Mammary epithelial cell (primary cell): ENCODE measurements at regions of chr12 and their contacts with region 1.

Region 1: GRCh38 chr12:96061864-96062453 is 26.6 kb upstream of the LTA4H start:
- DNase-seq: peak; percentile 72
- H3K4me3 ChIP-seq: no peak overlapping the region
- H3K27ac ChIP-seq: no peak overlapping the region
- H3K4me1 ChIP-seq: no peaks in the 10 kb centered on the region
- H3K27me3 ChIP-seq: no peaks in the 10 kb centered on the region
- CTCF ChIP-seq: peak; percentile 73 to 84

Region 2: DNA sequence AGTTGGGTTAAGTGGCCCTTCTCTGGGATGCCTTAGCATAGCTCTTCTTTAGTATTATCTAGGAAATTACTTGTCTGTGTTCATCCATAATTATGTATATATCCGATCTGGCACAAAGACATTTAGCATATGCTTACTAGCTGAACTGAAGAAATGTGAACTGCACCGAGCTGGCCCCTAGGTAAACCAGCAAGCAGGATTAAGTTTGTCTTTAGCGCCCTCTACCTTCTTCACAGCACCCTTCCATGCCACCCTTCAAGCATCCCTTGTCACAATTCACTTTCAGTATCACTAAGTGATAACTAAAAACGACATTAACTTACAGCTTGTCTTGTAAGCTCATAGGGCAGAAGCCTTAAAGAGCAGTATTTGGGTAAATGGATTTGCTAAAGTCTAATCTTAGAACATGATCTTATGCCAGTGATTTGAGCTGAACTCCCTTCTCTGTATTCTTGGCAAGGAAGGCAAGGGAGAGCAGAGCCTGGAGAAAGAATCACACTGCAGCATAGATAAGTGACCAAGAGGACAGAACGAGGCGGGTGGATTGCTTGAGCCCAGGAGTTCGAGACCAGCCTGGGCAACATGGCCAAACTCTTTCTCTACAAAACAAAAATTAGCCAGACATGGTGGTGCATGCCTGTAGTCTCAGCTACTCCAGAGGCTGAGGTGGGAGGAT is 63.2 kb before region 1 on chr12:
- CTCF ChIA-PET with region 1: no interaction called
- dilution Hi-C with region 1: no loop called
- in situ Hi-C with region 1: no loop called
- intact Hi-C with region 1: no loop called
- DNase-seq: peak; percentile 40
- H3K4me3 ChIP-seq: no peak overlapping the region
- H3K27ac ChIP-seq: no peak overlapping the region
- H3K4me1 ChIP-seq: peaks cover 16% of the 10 kb centered on the region
- H3K27me3 ChIP-seq: no peaks in the 10 kb centered on the region
- CTCF ChIP-seq: peak; percentile 73 to 74

Region 3: GRCh38 chr12:96132819-96133218 is 70.9 kb after region 1 on chr12:
- CTCF ChIA-PET with region 1: no interaction called
- dilution Hi-C with region 1: no loop called
- in situ Hi-C with region 1: no loop called
- intact Hi-C with region 1: loop called (anchors 1 kb)
- DNase-seq: no peak
- H3K4me3 ChIP-seq: no peak overlapping the region
- H3K27ac ChIP-seq: no peak overlapping the region
- H3K4me1 ChIP-seq: peaks cover 6% of the 10 kb centered on the region
- H3K27me3 ChIP-seq: no peaks in the 10 kb centered on the region
- CTCF ChIP-seq: peak; percentile 11 to 31

Region 4: DNA sequence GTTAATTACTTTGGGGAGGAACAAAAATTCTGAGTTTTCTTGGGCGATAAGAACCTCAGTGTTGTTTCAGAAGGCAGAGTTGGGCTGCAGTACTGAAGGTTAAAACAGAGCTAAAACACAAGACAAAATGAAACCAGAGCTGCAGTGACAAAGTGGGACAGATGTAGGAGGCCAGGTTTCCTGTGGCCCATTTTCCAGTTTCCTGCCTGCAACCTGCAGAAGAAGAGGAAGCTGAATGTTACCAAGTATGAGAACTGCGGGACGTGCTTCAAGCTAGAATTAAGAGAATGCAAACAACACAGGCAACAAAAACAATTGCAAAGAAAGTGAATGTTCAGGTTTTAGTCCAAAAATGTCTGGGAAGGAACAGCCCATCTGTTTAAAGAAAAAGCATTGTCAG is 150.0 kb after region 1 on chr12:
- CTCF ChIA-PET with region 1: interaction called, 4 read pairs
- dilution Hi-C with region 1: loop called (anchors 10 kb)
- in situ Hi-C with region 1: loop called (anchors 5 kb)
- intact Hi-C with region 1: loop called (anchors 1 kb)
- DNase-seq: no peak
- H3K4me3 ChIP-seq: no peak overlapping the region
- H3K27ac ChIP-seq: no peak overlapping the region
- H3K4me1 ChIP-seq: peaks cover 55% of the 10 kb centered on the region
- H3K27me3 ChIP-seq: no peaks in the 10 kb centered on the region
- CTCF ChIP-seq: no peak

Region 5: DNA sequence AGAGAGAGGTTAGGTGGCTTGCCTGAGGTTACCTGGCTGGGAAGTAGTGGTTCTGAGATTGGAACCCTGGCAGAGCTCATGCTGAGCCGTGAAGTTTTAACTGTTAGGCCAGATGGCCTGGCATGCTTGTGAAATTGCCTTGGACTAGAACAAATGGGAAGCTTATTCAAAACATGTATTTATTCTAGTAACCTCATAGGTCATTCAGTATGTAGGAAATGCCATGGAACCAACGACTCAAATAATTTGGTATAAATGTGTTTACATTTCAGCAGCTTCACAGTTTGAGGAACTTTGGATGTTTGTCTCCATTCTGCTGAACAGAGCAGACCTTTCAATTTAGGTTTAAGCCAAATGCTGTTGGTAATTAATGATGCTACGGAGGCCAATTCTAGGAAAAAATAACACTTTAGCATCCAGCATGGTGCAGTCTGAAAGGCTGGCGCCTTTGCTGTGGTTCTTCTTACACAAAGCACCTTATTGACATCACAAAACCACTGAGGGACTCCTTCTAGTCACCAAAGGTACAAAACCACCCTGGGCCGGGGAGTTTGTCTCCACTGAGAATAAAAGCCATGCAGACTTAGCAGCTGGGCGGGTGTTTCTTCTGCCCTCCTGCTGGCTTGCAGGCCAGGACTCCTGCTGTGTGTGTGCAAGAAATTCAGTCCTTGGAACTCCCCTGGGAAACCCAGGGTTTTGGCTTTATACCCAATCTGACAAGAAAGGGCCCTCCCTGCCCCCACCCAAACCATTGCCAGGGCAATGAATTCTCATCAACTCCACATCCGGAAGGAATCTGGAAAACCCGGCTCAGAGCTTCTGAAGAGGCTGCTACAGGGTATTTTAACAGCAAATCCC is 196.4 kb after region 1 on chr12:
- CTCF ChIA-PET with region 1: interaction called, 5 read pairs
- dilution Hi-C with region 1: no loop called
- in situ Hi-C with region 1: no loop called
- intact Hi-C with region 1: loop called (anchors 5 kb)
- DNase-seq: peak; percentile 39
- H3K4me3 ChIP-seq: no peak overlapping the region
- H3K27ac ChIP-seq: no peak overlapping the region
- H3K4me1 ChIP-seq: no peaks in the 10 kb centered on the region
- H3K27me3 ChIP-seq: no peaks in the 10 kb centered on the region
- CTCF ChIP-seq: no peak

Region 6: GRCh38 chr12:96416033-96416801 is 354.3 kb after region 1 on chr12:
- CTCF ChIA-PET with region 1: no interaction called
- dilution Hi-C with region 1: no loop called
- in situ Hi-C with region 1: loop called in 1 of 2 experiments (anchors 25 kb)
- intact Hi-C with region 1: loop called (anchors 5 kb)
- DNase-seq: peak; percentile 95
- H3K4me3 ChIP-seq: no peak overlapping the region
- H3K27ac ChIP-seq: peak overlapping the region; percentile 73
- H3K4me1 ChIP-seq: peaks cover 26% of the 10 kb centered on the region
- H3K27me3 ChIP-seq: no peaks in the 10 kb centered on the region
- CTCF ChIP-seq: no peak